ENCODE measurements at regions of chr6 and their contacts with region 1.

Region 1: GRCh38 chr6:37566111-37566949 is 66.6 kb upstream of the CCDC167 start:
- DNase-seq: peak; percentile 77
- ATAC-seq: peak; percentile 65
- H3K4me3 Mint-ChIP-seq: peak overlapping the region; percentile 60
- H3K27ac Mint-ChIP-seq: no peak overlapping the region
- H3K4me1 Mint-ChIP-seq: peaks cover 63% of the 10 kb centered on the region
- H3K27me3 Mint-ChIP-seq: no peaks in the 10 kb centered on the region
- CTCF ChIP-seq: no peak

Region 2: DNA sequence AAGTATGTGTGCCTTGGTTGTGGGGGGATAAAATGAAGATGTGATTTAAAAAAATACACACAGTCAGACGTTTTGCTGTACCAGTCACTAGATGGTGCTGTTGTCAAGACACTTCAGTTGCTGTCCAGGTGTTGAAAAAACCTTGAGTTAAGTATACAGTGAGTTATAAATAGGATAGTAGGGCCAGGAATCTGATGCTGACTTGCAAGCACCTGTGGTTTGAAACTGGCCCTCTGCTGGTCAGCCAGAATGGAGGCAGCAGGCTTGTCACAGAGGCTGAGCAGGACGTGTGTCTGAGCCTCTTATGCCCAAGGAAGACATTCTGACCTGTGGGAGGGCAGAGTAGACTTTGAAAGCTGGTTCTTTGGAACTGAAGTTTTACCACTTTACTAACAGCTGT is 184.8 kb before region 1 on chr6:
- CTCF ChIA-PET with region 1: no interaction called
- POLR2A ChIA-PET with region 1: no interaction called
- intact Hi-C with region 1: loop called (anchors 1 kb)
- DNase-seq: no peak
- ATAC-seq: peak; percentile 31
- H3K4me3 Mint-ChIP-seq: no peak overlapping the region
- H3K27ac Mint-ChIP-seq: no peak overlapping the region
- H3K4me1 Mint-ChIP-seq: peaks cover 22% of the 10 kb centered on the region
- H3K27me3 Mint-ChIP-seq: no peaks in the 10 kb centered on the region
- CTCF ChIP-seq: no peak

Region 3: DNA sequence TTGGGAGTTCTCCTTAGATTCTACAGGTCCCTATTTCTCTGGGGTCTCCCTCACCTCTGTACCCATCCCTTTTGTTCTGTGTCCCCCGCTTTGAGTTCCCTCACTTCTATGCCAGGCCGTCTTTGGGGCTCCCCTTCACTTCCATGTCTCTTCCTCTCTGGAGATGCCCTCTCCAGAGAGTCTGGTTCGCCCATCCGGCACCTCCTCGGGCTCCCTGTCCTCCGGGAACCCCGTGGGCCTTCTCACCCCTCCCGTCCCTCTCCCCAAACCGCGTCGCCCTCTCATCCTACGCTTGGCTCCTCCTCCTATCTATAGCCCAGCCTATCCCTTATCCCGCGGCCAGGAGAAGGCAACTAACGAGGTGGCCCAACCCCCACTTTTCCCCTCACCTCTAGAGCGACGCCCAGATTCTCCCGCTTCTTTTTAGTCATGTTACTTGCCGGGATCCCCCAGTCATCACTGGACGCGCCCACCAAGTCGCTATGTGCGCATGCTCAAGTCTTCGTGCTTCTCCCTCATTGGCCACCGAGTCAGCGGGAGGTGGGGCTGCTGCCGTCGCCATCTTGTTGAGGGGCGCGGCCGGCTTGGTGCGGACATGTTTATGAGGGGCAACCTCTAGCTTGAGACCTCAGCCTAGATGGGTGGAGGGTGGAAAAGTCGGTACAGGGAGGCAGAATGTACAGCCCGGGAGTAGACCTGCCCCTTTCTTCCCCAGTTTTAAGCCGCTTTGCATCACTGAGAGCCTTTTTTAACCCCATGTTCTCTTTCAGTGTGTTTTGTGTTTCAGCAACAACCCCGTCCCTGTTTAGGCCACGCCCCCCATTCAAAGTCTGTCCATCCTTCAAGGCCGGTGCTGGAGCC is 66.7 kb before region 1 on chr6 and contains the start of gene CCDC167:
- CTCF ChIA-PET with region 1: interaction called, 4 read pairs
- POLR2A ChIA-PET with region 1: interaction called, 3 read pairs
- intact Hi-C with region 1: loop called (anchors 1 kb)
- DNase-seq: peak; percentile 86
- ATAC-seq: peak; percentile 96
- H3K4me3 Mint-ChIP-seq: peak within 1 kb of the TSS; percentile 96
- H3K27ac Mint-ChIP-seq: peak within 1 kb of the TSS; percentile 82
- H3K4me1 Mint-ChIP-seq: peaks cover 65% of the 10 kb centered on the region
- H3K27me3 Mint-ChIP-seq: no peaks in the 10 kb centered on the region
- CTCF ChIP-seq: no peak
- total RNA-seq, gene CCDC167: 18.4 and 25.9 TPM in 2 replicates

Region 4: DNA sequence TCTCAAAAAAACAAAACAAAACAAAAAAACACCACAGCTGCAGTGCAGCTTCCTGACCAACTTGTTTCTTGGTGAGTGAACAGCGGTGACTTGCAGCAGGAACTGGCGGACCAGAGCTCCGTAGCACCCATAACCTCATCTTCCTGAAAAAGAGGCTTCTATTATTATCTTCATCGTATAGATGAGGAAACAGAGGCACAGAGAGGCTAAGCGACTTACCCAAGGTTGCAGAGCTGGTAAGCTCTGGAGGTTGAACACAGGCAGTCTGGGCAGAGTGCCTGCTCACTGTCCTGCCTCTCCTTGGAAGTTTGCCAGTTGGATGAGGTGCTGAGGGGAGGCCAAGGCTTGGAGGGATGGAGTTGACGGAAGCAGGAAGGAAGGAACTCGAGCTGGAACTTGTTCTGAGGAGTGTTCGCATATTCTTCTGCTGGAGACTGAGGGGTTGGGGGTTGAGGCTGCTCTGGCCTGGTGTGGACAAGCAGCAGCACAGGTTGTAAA is 18.7 kb before region 1 on chr6:
- CTCF ChIA-PET with region 1: interaction called, 10 read pairs
- POLR2A ChIA-PET with region 1: interaction called, 8 read pairs
- intact Hi-C with region 1: loop called (anchors 2 kb)
- DNase-seq: no peak
- ATAC-seq: peak; percentile 52
- H3K4me3 Mint-ChIP-seq: peak overlapping the region; percentile 12
- H3K27ac Mint-ChIP-seq: peak overlapping the region; percentile 72
- H3K4me1 Mint-ChIP-seq: peaks cover 75% of the 10 kb centered on the region
- H3K27me3 Mint-ChIP-seq: no peaks in the 10 kb centered on the region
- CTCF ChIP-seq: no peak

Region 5: DNA sequence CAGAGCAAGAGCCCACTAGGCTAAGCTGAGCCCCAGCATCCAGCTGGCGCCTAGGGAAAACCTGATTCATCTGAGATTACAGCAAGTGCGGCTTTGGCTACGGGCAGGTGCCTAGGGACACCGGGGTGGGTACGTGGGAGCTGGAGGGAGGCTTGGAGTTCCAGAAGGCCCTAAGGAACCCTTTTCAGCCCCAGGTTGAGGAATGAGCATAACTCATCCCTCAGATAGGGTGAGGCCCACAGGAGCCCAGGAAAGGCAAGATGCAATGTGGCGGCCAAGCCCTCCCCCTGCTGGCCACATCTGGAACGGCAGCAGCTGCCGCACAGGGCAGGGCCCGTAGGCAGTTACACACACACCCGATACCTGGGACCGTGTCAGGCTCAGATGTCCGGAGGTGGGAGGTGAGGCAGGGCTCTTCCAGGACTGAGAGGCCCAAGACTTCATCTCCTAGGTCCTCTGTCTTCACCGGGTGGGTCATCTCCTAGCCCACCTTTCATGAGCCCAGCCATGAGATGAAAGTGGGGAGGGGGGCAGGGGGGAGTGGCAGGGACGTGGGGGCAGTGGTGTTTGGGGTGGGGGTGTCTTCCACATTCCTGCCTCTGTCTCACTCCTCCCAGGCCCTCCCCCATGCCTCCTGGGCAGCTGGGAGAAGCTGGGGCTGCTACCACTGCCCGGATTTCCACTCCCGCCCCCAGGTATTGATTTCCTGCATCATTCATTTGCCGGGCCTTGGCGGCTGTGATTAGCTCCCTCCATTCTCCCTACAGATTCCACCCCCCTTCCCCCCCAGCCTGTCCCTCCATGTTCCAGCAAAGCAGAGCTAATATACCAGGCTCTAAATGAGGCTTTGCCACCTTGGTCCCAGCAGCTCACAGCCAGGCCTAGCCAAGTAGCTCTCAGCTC is 125.8 kb after region 1 on chr6:
- CTCF ChIA-PET with region 1: interaction called, 6 read pairs
- POLR2A ChIA-PET with region 1: no interaction called
- intact Hi-C with region 1: loop called (anchors 1 kb)
- DNase-seq: peak; percentile 74
- ATAC-seq: peak; percentile 88
- H3K4me3 Mint-ChIP-seq: no peak overlapping the region
- H3K27ac Mint-ChIP-seq: no peak overlapping the region
- H3K4me1 Mint-ChIP-seq: peaks cover 21% of the 10 kb centered on the region
- H3K27me3 Mint-ChIP-seq: peaks cover 18% of the 10 kb centered on the region
- CTCF ChIP-seq: peak; percentile 69